Activated CD4-positive, alpha-beta T cell treated with anti-CD3 and anti-CD28 coated beads for 36 hours (primary cell): ENCODE measurements at regions of chr17 and their contacts with region 1.

Region 1: GRCh38 chr17:16521070-16521727 is 29.2 kb upstream of the LRRC75A start:
- DNase-seq: peak; percentile 80
- ATAC-seq: peak; percentile 95
- H3K4me3 Mint-ChIP-seq: no peak overlapping the region
- H3K27ac Mint-ChIP-seq: no peak overlapping the region
- H3K4me1 Mint-ChIP-seq: peaks cover 8% of the 10 kb centered on the region
- H3K27me3 Mint-ChIP-seq: peaks cover 31% of the 10 kb centered on the region

Region 2: GRCh38 chr17:16363749-16364536 is 157.3 kb before region 1 on chr17:
- CTCF ChIA-PET with region 1: interaction called, 69 read pairs
- POLR2A ChIA-PET with region 1: no interaction called
- intact Hi-C with region 1: loop called (anchors 1 kb)
- DNase-seq: peak; percentile 89
- ATAC-seq: peak; percentile 98
- H3K4me3 Mint-ChIP-seq: no peak overlapping the region
- H3K27ac Mint-ChIP-seq: no peak overlapping the region
- H3K4me1 Mint-ChIP-seq: no peaks in the 10 kb centered on the region
- H3K27me3 Mint-ChIP-seq: no peaks in the 10 kb centered on the region

Region 3: DNA sequence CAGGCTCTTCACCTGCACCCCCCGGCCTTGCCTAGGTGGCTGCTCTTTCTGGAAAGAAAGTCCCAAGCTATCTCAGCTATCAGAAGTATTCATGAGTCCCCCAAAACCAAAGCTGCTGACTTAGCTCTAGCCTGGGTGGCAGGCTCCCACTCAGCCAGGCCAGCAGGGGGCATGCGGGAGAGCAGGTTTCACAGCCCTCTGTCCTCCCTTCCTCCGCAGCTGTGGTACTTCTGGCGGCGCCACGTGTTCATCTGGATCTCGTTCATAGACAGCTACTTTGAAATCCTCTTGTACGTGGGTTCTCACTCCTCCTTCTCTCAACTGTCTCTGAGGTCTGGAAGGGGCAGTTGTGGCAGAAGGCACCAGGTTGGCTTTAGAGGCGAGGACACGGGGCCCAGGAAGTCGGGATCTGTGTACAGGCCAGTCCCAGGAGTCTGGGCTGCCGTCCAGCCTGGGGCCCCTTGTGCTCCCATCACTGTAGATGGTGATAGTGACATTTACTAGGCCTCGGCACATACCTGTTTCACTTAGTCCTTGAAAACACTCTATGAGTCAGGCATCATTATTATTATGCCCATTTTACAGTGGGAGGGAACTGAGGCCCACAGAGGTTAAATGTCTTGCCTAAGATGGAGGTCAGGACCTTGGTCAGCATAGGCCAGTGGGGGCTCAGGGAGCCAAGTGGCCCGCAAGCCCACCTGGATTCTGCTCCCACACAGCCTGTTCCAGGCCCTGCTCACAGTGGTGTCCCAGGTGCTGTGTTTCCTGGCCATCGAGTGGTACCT is 92.9 kb before region 1 on chr17:
- CTCF ChIA-PET with region 1: interaction called, 7 read pairs
- POLR2A ChIA-PET with region 1: no interaction called
- intact Hi-C with region 1: loop called in 1 of 2 experiments (anchors 1 kb)
- DNase-seq: peak; percentile 77
- ATAC-seq: peak; percentile 93
- H3K4me3 Mint-ChIP-seq: no peak overlapping the region
- H3K27ac Mint-ChIP-seq: no peak overlapping the region
- H3K4me1 Mint-ChIP-seq: peaks cover 2% of the 10 kb centered on the region
- H3K27me3 Mint-ChIP-seq: no peaks in the 10 kb centered on the region

Region 4: GRCh38 chr17:16449121-16449570 is 72.1 kb before region 1 on chr17:
- CTCF ChIA-PET with region 1: interaction called, 74 read pairs
- POLR2A ChIA-PET with region 1: interaction called, 16 read pairs
- intact Hi-C with region 1: loop called (anchors 1 kb)
- DNase-seq: no peak
- ATAC-seq: peak; percentile 71
- H3K4me3 Mint-ChIP-seq: no peak overlapping the region
- H3K27ac Mint-ChIP-seq: no peak overlapping the region
- H3K4me1 Mint-ChIP-seq: peaks cover 42% of the 10 kb centered on the region
- H3K27me3 Mint-ChIP-seq: no peaks in the 10 kb centered on the region

Region 5: DNA sequence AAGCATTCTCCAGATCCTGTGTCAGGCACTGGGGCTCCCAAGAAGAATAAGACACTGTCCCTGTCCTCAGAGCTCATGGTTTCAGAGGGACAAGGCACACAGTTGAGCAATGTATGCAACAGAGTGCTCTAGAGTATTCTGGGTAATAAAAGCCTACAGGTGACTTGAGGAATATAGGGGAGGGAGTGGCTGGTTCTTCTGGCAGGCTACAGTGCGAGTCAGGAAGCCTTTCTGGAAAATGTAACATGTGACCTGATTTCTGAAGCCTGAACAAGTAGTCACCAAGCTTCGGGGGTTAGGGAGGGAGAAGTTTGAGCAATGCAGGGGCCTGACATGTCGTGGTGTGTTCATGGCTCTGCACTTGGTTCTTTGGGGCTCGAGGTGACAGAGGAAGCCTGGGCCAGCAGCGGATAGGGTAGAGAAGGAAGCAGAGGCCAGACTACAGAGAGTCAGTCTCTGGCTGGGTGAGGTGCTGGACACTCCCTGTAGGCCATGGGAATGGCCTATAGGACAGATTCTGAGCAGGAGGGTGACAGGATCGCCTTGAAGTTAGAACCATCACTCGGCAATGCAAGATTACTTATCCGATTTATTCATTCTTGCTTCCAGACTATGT is 13.2 kb before region 1 on chr17:
- CTCF ChIA-PET with region 1: interaction called, 10 read pairs
- POLR2A ChIA-PET with region 1: no interaction called
- intact Hi-C with region 1: no loop called
- DNase-seq: no peak
- ATAC-seq: no peak
- H3K4me3 Mint-ChIP-seq: no peak overlapping the region
- H3K27ac Mint-ChIP-seq: no peak overlapping the region
- H3K4me1 Mint-ChIP-seq: peaks cover 5% of the 10 kb centered on the region
- H3K27me3 Mint-ChIP-seq: no peaks in the 10 kb centered on the region

Region 6: DNA sequence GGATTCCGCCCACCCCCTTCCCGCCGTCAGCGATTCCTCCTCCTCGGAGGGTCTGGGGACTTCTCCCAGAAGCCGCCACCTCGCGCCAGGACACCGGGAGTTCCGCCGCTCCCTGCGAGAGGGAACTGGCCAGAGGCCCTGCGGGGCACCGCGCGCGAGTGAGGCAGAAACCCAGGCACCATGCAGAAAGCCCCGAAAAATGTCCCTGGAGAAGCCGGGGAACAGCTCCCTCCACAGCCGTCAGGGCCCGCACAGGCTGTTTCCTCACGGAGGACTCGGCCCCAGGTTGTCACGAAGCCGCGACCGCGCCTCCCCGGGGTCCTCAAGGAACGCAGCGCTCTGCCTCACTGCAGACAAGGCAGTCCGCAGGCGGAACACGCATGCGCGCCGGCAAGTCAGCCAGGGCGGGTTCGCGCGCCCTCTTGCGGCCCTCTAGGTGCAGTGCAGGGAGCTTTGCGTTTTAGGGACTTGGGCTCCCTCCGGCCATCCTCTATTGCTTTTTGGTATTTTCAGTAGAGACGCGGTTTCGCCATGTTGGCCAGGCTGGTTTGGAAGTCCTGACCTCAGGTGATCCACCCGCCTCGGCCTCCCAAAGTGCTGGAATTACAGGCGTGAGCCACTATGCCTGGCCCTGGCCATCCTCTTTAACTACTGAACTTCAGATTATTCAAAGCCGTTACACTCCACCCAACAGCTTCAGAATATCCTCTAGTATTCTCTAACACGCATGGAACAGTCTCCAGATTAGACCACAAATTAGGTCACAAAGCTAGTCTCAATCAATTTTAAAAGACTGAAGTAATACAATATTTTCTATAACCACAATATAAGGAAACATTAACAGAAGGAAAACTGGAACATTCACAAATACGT is 68.1 kb after region 1 on chr17:
- CTCF ChIA-PET with region 1: interaction called, 10 read pairs
- POLR2A ChIA-PET with region 1: no interaction called
- intact Hi-C with region 1: no loop called
- DNase-seq: peak; percentile 95
- ATAC-seq: peak; percentile 90
- H3K4me3 Mint-ChIP-seq: peak overlapping the region; percentile 64
- H3K27ac Mint-ChIP-seq: no peak overlapping the region
- H3K4me1 Mint-ChIP-seq: peaks cover 8% of the 10 kb centered on the region
- H3K27me3 Mint-ChIP-seq: peaks cover 34% of the 10 kb centered on the region